ENCODE measurements at regions of chr5 and their contacts with region 1.

Region 1: DNA sequence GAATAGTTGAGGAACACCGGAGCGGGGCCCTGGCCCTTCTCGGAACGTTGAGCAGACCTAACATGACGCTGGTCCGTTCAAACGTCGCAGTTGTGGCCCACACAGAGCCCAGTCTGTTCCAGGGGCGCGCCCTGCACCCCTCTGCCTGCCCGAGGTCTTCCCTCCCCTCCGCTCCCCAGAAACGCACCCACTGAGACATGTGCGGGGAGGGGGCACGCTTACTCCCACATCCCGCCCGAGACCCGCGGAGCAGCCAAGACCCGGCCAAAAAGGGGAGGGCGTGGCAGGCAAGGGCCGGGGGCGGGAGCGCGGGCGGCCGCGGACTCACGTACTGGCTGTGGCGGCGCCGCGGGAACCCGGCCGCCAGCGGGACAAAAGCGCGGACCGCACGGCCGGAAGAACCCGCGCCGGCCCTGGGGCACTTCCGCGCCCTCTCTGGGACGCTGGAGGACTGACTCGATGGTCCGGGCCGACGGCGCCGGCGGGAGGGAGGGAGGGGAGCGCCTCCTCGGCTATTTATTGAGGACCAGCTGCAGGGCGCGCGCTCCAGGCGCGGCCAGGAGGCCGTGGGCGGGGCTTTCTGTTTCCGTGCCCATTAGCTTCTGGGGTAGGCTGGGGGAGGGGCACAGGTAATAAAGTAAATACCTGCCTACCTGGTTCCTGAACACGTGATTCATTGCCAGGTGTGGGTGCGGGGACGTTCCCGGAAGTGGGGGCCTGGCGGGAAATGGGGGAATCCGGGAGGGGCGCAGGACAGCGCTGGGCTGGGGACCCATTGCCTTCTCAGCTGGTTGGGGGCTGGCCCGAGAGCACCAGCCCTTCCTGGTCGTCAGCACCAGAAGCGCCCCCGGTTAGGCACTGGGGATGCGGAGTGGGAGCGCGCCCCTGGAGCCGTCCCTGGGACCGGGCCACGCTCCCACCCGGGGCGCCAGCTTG is at the start of gene ZFP62:
- DNase-seq: peak; percentile 95
- H3K4me3 Mint-ChIP-seq: peak within 1 kb of the TSS; percentile 84
- H3K27ac Mint-ChIP-seq: peak within 1 kb of the TSS; percentile 89
- H3K4me1 Mint-ChIP-seq: peaks cover 21% of the 10 kb centered on the region
- H3K27me3 Mint-ChIP-seq: no peaks in the 10 kb centered on the region
- CTCF ChIP-seq: no peak
- total RNA-seq, gene ZFP62: 31.2 and 36.9 TPM in 2 replicates

Region 2: DNA sequence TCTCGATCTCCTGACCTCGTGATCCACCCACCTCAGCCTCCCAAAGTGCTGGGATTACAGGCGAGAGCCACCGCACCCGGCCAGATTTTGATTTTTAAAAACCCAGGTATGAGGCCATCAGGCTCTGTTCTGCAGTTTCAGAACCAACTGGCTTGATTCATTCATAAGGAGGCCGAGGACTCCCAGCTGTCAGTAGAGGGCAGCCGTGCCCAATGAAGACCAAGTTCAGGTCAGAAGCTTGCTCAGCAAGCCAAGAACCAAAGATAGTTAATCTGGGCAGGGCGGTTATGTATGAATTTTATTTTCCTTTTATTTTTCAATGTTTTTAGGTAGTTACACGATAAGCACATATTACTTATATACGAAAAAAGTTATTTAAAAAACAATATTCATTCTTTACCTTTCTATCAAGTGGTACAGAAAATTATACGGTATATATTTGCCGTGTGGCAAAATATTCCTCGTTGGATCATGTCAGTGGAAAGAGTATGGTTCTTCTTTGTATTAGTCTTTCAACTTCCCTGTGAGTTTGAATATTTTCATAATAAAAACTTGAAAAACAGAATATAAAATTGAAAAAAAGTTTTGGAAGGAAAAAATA is 76.6 kb before region 1 on chr5:
- CTCF ChIA-PET with region 1: interaction called, 7 read pairs
- POLR2A ChIA-PET with region 1: interaction called, 4 read pairs
- intact Hi-C with region 1: loop called (anchors 2 kb)
- DNase-seq: peak; percentile 88
- H3K4me3 Mint-ChIP-seq: no peak overlapping the region
- H3K27ac Mint-ChIP-seq: no peak overlapping the region
- H3K4me1 Mint-ChIP-seq: peaks cover 13% of the 10 kb centered on the region
- H3K27me3 Mint-ChIP-seq: no peaks in the 10 kb centered on the region
- CTCF ChIP-seq: peak; percentile 90

Region 3: GRCh38 chr5:180810210-180810958 is 50.8 kb before region 1 on chr5:
- CTCF ChIA-PET with region 1: no interaction called
- POLR2A ChIA-PET with region 1: interaction called, 67 read pairs
- intact Hi-C with region 1: no loop called
- DNase-seq: peak; percentile 98
- H3K4me3 Mint-ChIP-seq: peak overlapping the region; percentile 80
- H3K27ac Mint-ChIP-seq: peak overlapping the region; percentile 75
- H3K4me1 Mint-ChIP-seq: peaks cover 53% of the 10 kb centered on the region
- H3K27me3 Mint-ChIP-seq: no peaks in the 10 kb centered on the region
- CTCF ChIP-seq: no peak

Region 4: DNA sequence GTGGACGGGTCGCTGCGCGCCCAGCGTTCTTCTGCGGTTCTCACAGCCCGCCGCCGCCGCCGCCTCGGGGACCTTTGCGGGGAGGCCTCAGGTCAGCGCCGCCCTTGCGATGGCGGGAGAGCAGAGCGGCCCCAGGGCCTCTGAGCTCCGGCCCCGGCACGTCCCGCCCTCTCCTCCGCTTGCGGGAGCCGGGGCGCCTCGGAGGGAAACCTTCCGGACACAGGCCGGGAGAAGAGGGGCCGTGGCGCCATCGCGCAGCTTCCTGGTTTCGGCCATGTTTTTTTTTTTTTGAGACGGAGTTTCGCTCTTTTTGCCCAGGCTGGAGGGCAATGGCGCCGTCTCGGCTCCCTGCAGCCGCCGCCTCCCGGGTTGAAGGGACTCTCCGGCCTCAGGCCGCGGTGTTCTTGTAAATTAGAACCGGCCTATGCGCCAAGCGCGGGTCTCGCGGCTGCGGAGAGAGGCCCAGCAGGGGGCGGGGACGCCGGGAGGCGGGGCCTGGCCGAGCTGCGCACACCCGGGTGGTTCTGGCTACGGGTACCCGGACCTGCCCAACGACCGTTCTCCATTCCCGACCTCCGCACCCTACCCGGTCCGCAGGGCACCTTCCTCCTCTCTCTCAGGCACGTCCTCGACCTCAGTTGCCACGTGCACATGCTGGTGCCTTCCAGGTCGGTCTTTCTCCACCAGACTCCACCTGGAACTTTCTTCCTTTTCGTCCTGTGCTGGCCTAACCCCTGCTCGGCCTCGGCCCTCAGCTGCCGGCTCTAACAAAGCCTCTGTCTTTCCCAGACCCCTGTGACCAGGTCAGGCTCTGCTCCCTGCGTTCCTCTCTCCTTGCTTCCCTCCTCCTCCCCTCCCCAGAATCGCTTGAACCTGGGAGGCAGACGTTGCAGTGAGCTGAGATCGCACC is 29.8 kb before region 1 on chr5:
- CTCF ChIA-PET with region 1: interaction called, 4 read pairs
- POLR2A ChIA-PET with region 1: interaction called, 13 read pairs
- intact Hi-C with region 1: loop called (anchors 1 kb)
- DNase-seq: peak; percentile 70
- H3K4me3 Mint-ChIP-seq: peak overlapping the region; percentile 93
- H3K27ac Mint-ChIP-seq: peak overlapping the region; percentile 96
- H3K4me1 Mint-ChIP-seq: peaks cover 15% of the 10 kb centered on the region
- H3K27me3 Mint-ChIP-seq: no peaks in the 10 kb centered on the region
- CTCF ChIP-seq: no peak

Region 5: DNA sequence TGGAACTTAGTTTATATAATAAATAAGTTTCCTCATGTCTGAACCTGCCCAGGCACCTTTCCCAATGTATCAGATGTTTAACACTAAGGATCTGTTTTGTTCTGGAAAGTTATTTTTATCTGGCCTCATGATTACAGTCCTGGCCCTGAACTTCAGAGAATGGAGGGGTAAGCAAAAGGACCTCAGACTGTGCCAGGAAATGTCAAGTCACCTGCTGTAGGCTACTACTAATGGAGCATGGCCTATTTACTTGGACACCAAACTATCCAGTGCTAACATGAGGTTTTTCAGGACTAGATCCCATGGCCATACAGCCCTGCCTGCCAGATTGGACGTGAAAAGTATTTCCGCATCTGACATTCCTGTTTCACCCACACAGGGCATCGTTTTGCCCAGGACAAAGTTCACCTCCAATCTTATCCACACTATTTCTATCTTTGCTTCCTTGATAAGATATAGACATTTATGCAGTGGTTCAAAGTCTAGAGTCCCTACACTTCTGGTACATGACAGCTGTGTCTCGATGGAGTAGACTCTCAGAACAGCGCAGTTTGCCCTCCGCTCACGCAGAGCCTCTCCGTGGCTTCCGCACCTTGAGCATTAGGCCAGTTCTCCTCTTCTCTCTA is 37.6 kb after region 1 on chr5 and contains the start of gene BTNL8:
- CTCF ChIA-PET with region 1: no interaction called
- POLR2A ChIA-PET with region 1: no interaction called
- intact Hi-C with region 1: no loop called
- DNase-seq: peak; percentile 16
- H3K4me3 Mint-ChIP-seq: no peak within 1 kb of the TSS
- H3K27ac Mint-ChIP-seq: peak within 1 kb of the TSS; percentile 6
- H3K4me1 Mint-ChIP-seq: peaks cover 6% of the 10 kb centered on the region
- H3K27me3 Mint-ChIP-seq: no peaks in the 10 kb centered on the region
- CTCF ChIP-seq: no peak
- total RNA-seq, gene BTNL8: not detected in 2 replicates

Region 6: GRCh38 chr5:180935203-180935602 is 74.0 kb after region 1 on chr5:
- CTCF ChIA-PET with region 1: no interaction called
- POLR2A ChIA-PET with region 1: no interaction called
- intact Hi-C with region 1: no loop called
- DNase-seq: no peak
- H3K4me3 Mint-ChIP-seq: no peak overlapping the region
- H3K27ac Mint-ChIP-seq: no peak overlapping the region
- H3K4me1 Mint-ChIP-seq: no peaks in the 10 kb centered on the region
- H3K27me3 Mint-ChIP-seq: peaks cover 2% of the 10 kb centered on the region
- CTCF ChIP-seq: no peak

Region 7: DNA sequence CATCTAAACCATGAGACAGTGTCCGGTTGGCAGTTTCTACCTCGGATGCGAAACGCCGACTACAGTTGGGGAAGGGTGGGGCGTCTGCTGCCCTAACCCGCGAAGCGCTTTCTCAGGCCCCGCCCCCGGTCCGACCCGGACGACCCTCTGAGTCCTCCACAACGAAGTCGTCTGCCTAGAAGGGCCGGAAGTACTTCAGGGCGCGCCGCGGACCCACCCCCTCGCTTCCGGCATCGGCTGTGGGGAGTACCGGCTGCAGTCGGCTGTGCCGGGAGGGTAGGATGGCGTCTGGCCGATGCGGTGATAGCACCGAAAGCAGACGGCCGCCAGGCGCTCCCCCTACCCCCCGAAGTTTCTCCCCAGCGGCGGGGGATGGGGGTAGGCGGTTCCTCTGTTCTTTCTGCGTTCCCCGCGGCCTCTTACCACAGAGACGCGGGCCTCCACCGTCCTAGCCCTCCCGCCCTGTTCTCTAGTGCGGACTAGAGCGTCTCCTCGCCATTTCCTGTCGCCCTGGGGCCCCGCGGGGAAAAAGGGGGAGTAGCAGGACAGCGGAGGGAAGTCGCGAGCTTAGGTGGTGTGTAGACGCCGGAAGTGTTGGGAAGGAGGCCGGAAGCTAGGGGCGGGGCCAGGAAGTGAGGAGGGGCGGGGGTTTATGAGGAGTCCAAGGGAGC is 362.0 kb after region 1 on chr5 and contains the start of gene TRIM41:
- CTCF ChIA-PET with region 1: no interaction called
- POLR2A ChIA-PET with region 1: interaction called, 12 read pairs
- intact Hi-C with region 1: no loop called
- DNase-seq: peak; percentile 99
- H3K4me3 Mint-ChIP-seq: peak within 1 kb of the TSS; percentile 91
- H3K27ac Mint-ChIP-seq: peak within 1 kb of the TSS; percentile 91
- H3K4me1 Mint-ChIP-seq: peaks cover 26% of the 10 kb centered on the region
- H3K27me3 Mint-ChIP-seq: no peaks in the 10 kb centered on the region
- CTCF ChIP-seq: no peak
- total RNA-seq, gene TRIM41: 42.8 and 49.4 TPM in 2 replicates

Measured in MCF 10A (cell line).